Thyroid gland (tissue), 4 donors: ENCODE measurements at regions of chr9 and their contacts with region 1.

Region 1: GRCh38 chr9:35071814-35072460 is 488 bp downstream of the VCP start:
- DNase-seq: peak; percentile 87 to 90
- H3K4me3 ChIP-seq: peak overlapping the region; percentile 82 to 100 (median 98)
- H3K27ac ChIP-seq: peak overlapping the region; percentile 96 to 100 (median 100)
- H3K4me1 ChIP-seq: peaks cover 22 to 32% of the 10 kb centered on the region in 2 donors
- H3K27me3 ChIP-seq: no peaks in the 10 kb centered on the region
- CTCF ChIP-seq: peak in 2 of 6 experiments; percentile 10 to 26
- POLR2A ChIP-seq: peak in 1 of 2 donors; percentile 27

Region 2: GRCh38 chr9:34686231-34686630 is 385.7 kb before region 1 on chr9:
- intact Hi-C with region 1: no loop called
- DNase-seq: peak; percentile 12 to 14
- H3K4me3 ChIP-seq: no peak overlapping the region
- H3K27ac ChIP-seq: no peak overlapping the region
- H3K4me1 ChIP-seq: no peaks in the 10 kb centered on the region
- H3K27me3 ChIP-seq: no peaks in the 10 kb centered on the region
- CTCF ChIP-seq: no peak
- POLR2A ChIP-seq: no peak

Region 3: DNA sequence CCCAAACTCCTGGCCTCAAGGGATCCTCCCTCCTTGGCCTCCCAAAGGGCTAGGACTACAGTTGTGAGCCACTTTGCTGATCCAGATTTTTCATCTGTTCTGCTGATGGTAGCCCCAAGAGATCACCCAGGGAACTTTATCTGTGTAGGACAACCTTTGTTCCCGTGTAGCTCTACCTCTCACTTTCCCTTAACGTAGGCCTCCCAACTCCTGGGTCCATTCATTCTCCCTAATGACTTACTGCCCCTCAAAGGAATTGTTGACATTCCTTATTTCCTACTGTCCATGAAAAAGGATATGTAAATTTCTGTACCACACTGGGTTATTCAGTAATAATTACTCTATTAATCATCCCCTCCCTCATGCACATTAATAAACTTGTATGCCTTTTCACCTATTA is 164.9 kb before region 1 on chr9:
- intact Hi-C with region 1: no loop called
- DNase-seq: no peak
- H3K4me3 ChIP-seq: no peak overlapping the region
- H3K27ac ChIP-seq: no peak overlapping the region
- H3K4me1 ChIP-seq: no peaks in the 10 kb centered on the region
- H3K27me3 ChIP-seq: no peaks in the 10 kb centered on the region
- CTCF ChIP-seq: no peak
- POLR2A ChIP-seq: no peak

Region 4: GRCh38 chr9:34994260-34994899 is 77.6 kb before region 1 on chr9:
- intact Hi-C with region 1: loop called (anchors 5 kb)
- DNase-seq: peak; percentile 35 to 37
- H3K4me3 ChIP-seq: no peak overlapping the region
- H3K27ac ChIP-seq: peak overlapping the region; percentile 28 to 76 (median 71)
- H3K4me1 ChIP-seq: peaks cover 20 to 58% of the 10 kb centered on the region in 2 donors
- H3K27me3 ChIP-seq: no peaks in the 10 kb centered on the region
- CTCF ChIP-seq: peak in 4 of 6 experiments; percentile 11 to 54 (median 47)
- POLR2A ChIP-seq: no peak

Region 5: DNA sequence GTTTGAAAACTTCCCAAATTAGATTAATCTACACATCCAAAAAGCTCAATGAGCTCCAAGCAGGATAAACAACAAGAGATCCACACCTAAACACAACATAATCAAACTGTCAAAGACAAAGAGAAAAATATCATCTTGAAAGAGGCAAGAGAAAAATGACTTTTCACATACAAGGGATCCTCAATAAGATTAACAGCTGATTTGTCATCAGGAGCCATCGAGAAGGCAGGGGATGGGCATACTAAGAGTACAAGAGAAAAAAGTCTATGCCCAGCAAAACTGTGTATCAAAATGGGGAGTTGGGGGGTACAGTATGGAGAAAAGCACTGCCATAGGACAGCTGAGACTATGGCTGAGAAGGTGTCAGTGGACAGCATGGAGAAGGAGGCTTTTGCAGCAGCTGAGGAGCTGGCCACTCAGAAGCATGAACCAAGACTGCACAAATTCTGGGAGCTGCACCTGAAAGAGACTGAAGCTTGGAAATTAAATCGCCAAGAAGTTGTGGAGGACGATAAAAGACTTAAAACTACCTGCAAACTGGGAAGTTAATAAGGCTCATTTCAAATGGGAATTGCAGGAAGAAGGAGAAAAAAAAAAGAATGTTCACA is 61.5 kb before region 1 on chr9:
- intact Hi-C with region 1: no loop called
- DNase-seq: no peak
- H3K4me3 ChIP-seq: no peak overlapping the region
- H3K27ac ChIP-seq: no peak overlapping the region
- H3K4me1 ChIP-seq: no peaks in the 10 kb centered on the region
- H3K27me3 ChIP-seq: no peaks in the 10 kb centered on the region
- CTCF ChIP-seq: no peak
- POLR2A ChIP-seq: no peak

Region 6: DNA sequence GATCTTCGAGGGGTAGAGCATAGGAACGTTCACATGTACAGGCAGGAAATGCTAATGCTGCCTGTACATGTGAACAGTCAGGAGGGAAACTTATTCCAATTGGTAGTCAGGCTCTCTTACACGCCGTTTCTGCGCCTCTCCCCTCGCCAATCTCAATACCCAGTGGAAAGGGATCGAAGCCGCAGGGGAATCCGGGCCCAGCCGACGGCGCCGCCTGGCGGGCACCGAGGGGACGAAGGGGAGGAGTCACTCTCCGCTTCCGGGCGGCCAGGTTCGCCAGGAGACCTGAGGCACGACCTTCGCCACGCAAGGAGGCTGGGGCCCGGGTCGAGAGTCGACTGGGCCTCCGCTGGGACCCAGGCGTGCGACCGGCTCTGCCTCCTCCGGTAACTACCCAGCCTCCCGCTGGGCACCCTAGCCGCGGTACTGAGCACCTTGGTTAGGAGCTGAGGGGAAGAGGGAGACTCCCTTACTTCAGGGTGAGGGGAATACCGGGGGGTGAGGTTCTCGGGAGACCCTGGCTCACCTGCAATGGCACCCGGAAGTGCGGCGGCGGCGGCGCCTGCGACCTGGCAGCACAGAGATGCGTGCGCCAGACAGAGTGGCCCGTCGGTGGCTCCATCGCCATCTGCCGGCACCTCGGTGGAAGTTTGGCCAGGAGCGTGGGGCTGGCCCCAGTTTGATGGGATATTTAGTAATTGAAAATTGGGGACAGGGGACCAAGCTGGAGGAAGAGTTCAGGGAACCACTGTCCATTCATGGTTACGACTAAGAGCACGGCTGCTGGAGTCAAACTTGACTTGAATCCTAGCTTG is 24.3 kb after region 1 on chr9 and contains the start of gene PIGO:
- intact Hi-C with region 1: loop called (anchors 1 kb)
- DNase-seq: peak; percentile 91
- H3K4me3 ChIP-seq: peak within 1 kb of the TSS; percentile 71 to 92 (median 87)
- H3K27ac ChIP-seq: peak within 1 kb of the TSS; percentile 94 to 97 (median 95)
- H3K4me1 ChIP-seq: peaks cover 4 to 9% of the 10 kb centered on the region in 2 donors
- H3K27me3 ChIP-seq: no peaks in the 10 kb centered on the region
- CTCF ChIP-seq: peak; percentile 61 to 79 (median 65)
- POLR2A ChIP-seq: peak; percentile 6 to 65
- total RNA-seq, gene PIGO: 20.8 to 50.5 (median 39.4) TPM